ENCODE measurements at regions of chr1 and their contacts with region 1.

Region 1: GRCh38 chr1:1615256-1616044 is at the start of gene MIB2:
- DNase-seq: peak; percentile 99 to 100
- ATAC-seq: peak; percentile 86 to 96 (median 90)
- H3K4me3 ChIP-seq: peak within 1 kb of the TSS; percentile 91
- H3K4me3 Mint-ChIP-seq: peak within 1 kb of the TSS; percentile 99
- H3K27ac ChIP-seq: peak within 1 kb of the TSS; percentile 100
- H3K27ac Mint-ChIP-seq: peak within 1 kb of the TSS; percentile 94 to 95
- H3K4me1 ChIP-seq: peaks cover 24% of the 10 kb centered on the region
- H3K4me1 Mint-ChIP-seq: peaks cover 18 to 22% of the 10 kb centered on the region in 2 donors
- H3K27me3 ChIP-seq: no peaks in the 10 kb centered on the region
- H3K27me3 Mint-ChIP-seq: no peaks in the 10 kb centered on the region
- CTCF ChIP-seq: no peak
- total RNA-seq, gene MIB2: 44.9 to 54.1 (median 46.0) TPM

Region 2: GRCh38 chr1:1574721-1575537 is 40.5 kb before region 1 on chr1 and contains the start of gene SSU72:
- intact Hi-C with region 1: loop called (anchors 2 kb)
- DNase-seq: peak; percentile 97
- ATAC-seq: peak; percentile 82 to 91 (median 85)
- H3K4me3 ChIP-seq: peak within 1 kb of the TSS; percentile 84
- H3K4me3 Mint-ChIP-seq: peak within 1 kb of the TSS; percentile 99
- H3K27ac ChIP-seq: peak within 1 kb of the TSS; percentile 95
- H3K27ac Mint-ChIP-seq: peak within 1 kb of the TSS; percentile 99
- H3K4me1 ChIP-seq: peaks cover 38% of the 10 kb centered on the region
- H3K4me1 Mint-ChIP-seq: peaks cover 25 to 27% of the 10 kb centered on the region in 2 donors
- H3K27me3 ChIP-seq: no peaks in the 10 kb centered on the region
- H3K27me3 Mint-ChIP-seq: peaks cover 0 to 4% of the 10 kb centered on the region in 2 donors
- CTCF ChIP-seq: no peak
- total RNA-seq, gene SSU72: 87.5 to 107 (median 93.9) TPM

Region 3: DNA sequence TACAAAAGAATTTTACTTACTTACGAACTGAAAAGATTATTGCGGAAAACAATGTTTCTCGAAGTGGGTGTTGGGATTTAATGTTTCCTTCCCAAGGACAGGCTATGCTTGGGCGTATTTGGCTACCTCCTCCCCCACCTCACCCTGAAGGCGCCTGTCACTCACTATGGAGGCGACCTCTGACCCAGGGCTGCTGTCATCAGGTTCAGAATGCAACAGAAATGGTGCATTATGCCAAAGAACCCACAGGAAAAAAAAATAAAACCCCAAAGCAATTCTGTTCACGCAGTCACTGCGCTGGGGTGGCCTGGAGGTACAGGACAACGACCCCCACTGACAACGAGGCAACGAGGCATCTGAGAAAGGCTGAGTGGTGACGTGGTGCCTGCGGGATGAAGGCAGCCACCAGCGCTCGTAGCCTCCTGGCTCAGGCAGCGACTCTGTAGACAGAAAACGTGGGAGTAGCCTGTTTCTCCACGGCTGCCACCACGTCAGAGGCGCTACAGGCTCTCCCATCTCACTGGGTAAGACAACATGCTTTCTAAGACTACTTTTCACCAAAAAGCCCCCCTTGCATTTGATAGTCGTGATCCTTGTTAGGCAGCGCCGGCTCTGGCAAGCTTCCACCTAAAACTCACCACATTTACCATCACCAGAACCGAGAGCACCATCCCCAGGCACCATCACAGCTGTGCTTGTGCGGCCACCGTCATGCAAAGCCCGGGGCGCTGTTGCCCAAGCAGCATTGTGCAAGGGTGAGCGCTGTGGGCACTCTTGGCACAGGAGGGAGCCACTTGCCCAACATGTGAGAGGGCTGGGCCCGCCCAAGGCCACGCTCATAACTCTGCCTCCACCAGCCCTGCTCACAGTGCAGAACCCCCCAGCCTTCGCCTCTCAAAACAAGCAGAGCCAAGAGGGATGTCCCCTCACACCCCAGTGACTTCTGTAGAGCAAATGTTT is 148.5 kb after region 1 on chr1:
- intact Hi-C with region 1: no loop called
- DNase-seq: peak in 1 of 2 donors; percentile 34
- ATAC-seq: peak; percentile 44 to 75 (median 55)
- H3K4me3 ChIP-seq: no peak overlapping the region
- H3K4me3 Mint-ChIP-seq: no peak overlapping the region
- H3K27ac ChIP-seq: no peak overlapping the region
- H3K27ac Mint-ChIP-seq: peak overlapping the region in 1 of 2 donors; percentile 35
- H3K4me1 ChIP-seq: peaks cover 10% of the 10 kb centered on the region
- H3K4me1 Mint-ChIP-seq: peaks cover 18% of the 10 kb centered on the region in 2 donors
- H3K27me3 ChIP-seq: no peaks in the 10 kb centered on the region
- H3K27me3 Mint-ChIP-seq: no peaks in the 10 kb centered on the region
- CTCF ChIP-seq: no peak